Pancreas (tissue), 10 donors: ENCODE measurements at regions of chr1 and their contacts with region 1.

Region 1: DNA sequence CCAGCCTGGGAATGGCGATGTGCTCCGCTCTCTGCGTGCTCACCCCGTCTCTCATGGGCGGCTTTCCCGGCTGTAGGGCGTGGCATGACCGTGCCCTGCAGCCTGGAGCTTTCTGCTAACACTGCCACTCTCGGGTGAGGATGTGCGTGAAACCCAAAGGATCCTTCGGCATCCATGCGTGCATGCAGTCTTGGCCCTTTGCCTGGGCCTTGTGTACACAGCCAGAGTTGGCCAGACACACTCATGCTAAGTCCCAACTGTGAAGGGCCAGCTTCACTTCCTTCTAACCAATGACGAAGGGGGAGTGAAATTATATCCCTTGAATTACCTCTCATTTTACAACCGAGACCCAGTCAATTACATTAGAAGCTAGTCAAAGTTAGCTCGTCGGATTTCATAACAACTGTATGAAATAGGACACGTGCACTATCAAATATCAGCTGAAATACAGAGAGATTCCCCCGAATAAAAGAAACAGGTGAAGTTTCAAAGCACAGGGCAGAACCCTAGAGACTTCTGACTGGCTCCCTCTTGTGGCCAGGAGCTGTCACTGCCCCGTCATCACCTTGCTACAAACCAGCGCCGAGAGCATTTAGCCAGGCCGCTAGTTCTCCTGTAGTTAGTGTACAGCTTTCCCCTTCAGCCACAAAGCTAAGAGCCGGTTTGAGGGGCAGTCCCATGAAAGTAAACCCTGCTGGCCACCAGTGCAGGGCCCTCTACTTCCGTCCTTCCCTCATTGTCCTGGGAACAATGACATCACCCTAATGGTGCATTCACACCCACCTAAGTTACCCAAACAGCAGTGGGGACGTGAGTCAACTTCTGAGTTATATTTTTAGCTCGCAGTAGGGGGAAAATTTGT is 63.4 kb upstream of the COA6 start:
- DNase-seq: peak; percentile 52 to 80 (median 77)
- ATAC-seq: peak; percentile 93 to 98 (median 94)
- H3K4me3 ChIP-seq: no peak overlapping the region
- H3K27ac ChIP-seq: no peak overlapping the region
- H3K4me1 ChIP-seq: no peaks in the 10 kb centered on the region
- H3K27me3 ChIP-seq: no peaks in the 10 kb centered on the region
- CTCF ChIP-seq: peak; percentile 86 to 91 (median 88)

Region 2: GRCh38 chr1:234206651-234207284 is 103.1 kb before region 1 on chr1:
- intact Hi-C with region 1: loop called in 2 of 3 experiments (anchors 10 kb)
- DNase-seq: no peak
- ATAC-seq: no peak
- H3K4me3 ChIP-seq: no peak overlapping the region
- H3K27ac ChIP-seq: no peak overlapping the region
- H3K4me1 ChIP-seq: no peaks in the 10 kb centered on the region
- H3K27me3 ChIP-seq: no peaks in the 10 kb centered on the region
- CTCF ChIP-seq: no peak

Region 3: GRCh38 chr1:234212764-234213657 is 96.8 kb before region 1 on chr1:
- intact Hi-C with region 1: loop called in 2 of 3 experiments (anchors 10 kb)
- DNase-seq: peak in 3 of 6 donors; percentile 35 to 63 (median 40)
- ATAC-seq: peak; percentile 45 to 75 (median 67)
- H3K4me3 ChIP-seq: no peak overlapping the region
- H3K27ac ChIP-seq: no peak overlapping the region
- H3K4me1 ChIP-seq: no peaks in the 10 kb centered on the region
- H3K27me3 ChIP-seq: no peaks in the 10 kb centered on the region
- CTCF ChIP-seq: peak in 3 of 4 donors; percentile 40 to 62 (median 41)

Region 4: DNA sequence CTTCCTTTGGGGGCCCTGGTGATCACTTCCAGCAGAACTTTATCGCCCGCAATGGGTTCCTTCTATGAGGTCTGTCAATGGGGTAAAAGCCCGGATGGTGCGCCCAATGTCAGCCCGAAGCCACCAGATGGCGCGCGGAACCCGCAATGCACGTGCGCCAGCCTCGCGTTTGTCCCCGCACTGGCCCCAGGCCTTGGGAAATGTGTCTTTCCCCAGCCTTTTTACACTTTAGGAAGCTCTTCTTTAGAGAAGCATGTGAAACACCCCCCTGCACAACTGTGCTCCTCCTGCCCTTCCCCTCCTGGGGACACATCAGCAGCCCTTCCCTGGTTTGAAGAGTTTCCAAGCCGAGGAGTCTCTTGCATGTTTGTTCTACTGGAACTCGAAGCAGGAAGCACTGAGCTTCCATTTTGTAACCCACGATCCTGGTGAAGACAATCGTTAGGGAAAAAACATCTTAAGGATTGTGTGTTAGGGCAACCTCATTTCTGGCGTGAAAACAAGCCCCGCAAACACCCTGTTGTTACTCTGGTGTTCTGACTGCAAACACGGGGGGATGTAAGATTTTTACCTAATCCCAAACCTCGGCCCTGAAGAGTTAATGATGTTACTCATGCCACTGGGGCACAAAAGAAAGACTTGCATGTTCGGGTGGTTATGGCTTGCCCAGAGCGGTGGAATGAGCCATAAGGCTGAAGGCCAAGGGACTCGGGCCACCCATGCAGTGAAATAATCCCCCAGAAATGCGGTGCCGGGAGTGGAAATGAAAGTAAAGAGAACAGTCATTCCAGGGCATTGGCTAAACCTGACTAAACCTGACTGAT is 189.5 kb after region 1 on chr1:
- intact Hi-C with region 1: no loop called
- DNase-seq: peak; percentile 84 to 95 (median 90)
- ATAC-seq: peak; percentile 97 to 100 (median 98)
- H3K4me3 ChIP-seq: no peak overlapping the region
- H3K27ac ChIP-seq: peak overlapping the region; percentile 39 to 74 (median 46)
- H3K4me1 ChIP-seq: peaks cover 0 to 14% (median 7%) of the 10 kb centered on the region in 3 donors
- H3K27me3 ChIP-seq: no peaks in the 10 kb centered on the region
- CTCF ChIP-seq: peak; percentile 71 to 88 (median 80)

Region 5: DNA sequence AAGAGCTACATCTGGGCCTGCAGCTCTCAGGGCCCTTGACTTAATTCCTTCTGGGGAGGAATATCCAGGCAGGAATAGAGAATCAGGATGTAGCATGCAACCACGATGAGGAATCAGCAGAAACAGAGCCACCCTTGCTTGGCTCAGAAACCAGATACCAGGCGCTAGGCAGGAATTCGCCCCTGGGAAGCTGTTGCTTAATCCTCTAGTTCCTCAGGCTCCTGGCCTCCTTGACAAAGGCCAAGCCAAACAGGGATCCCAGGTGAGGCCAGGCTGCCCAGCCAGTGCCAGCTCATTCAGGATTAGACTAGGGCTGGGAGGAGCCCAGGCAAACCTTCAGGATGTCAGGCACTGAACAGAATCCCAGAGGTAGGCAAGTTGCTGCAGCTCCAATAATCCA is 348.3 kb after region 1 on chr1:
- intact Hi-C with region 1: no loop called
- DNase-seq: peak; percentile 62 to 83 (median 78)
- ATAC-seq: peak; percentile 82 to 95 (median 94)
- H3K4me3 ChIP-seq: no peak overlapping the region
- H3K27ac ChIP-seq: peak overlapping the region; percentile 43 to 82 (median 66)
- H3K4me1 ChIP-seq: peaks cover 15 to 16% (median 16%) of the 10 kb centered on the region in 3 donors
- H3K27me3 ChIP-seq: no peaks in the 10 kb centered on the region
- CTCF ChIP-seq: no peak